Posterior vena cava (tissue), 2 donors: ENCODE measurements at regions of chr13 and their contacts with region 1.

Region 1: GRCh38 chr13:63706751-63707150 is 2291.1 kb upstream of the PCDH20 start:
- DNase-seq: no peak

Region 2: GRCh38 chr13:63643543-63643942 is 63.2 kb before region 1 on chr13:
- intact Hi-C with region 1: loop called in 1 of 2 experiments (anchors 2 kb)
- DNase-seq: no peak